Dendritic cell treated with granulocyte-macrophage colony-stimulating factor and Interleukin-4, amounts not matched to agents 40 ng/mL and 50 ng/mL, for 4 days (primary cell): ENCODE measurements at regions of chr5 and their contacts with region 1.

Region 1: GRCh38 chr5:76351577-76351976 is 51.5 kb upstream of the IQGAP2 start:
- H3K4me3 Mint-ChIP-seq: no peak overlapping the region
- H3K27ac Mint-ChIP-seq: no peak overlapping the region
- H3K4me1 Mint-ChIP-seq: no peaks in the 10 kb centered on the region
- H3K27me3 Mint-ChIP-seq: no peaks in the 10 kb centered on the region

Region 2: DNA sequence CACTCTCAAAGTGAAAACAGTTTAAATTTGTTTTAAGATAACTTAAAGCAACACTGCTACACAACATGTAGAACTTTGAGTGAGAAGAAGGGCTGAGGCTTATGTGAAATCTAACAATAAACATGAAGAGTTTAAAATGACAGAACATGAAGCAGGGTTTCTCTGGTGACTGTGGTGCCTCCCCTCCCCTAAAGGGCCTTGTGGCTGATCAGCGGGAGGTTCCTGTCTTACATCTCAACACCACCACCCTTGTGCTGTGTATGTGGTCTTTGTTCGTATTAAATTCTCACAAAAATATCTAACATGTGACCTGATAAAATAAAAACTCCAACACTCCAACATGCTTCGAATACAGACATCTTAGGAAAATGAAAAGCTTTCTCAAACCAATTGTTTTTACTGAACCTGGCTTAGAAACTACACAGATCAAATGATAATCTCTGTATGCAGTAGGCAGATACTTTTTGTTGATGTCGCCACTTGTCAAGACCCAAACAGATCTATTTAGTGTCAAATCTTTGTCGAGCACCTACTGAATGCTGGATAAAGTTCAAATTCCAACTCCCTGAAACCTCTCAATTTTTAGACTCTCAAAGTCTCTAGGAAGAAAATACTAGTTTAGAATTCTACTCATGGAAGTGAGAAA is 41.6 kb after region 1 on chr5:
- intact Hi-C with region 1: loop called (anchors 5 kb)
- H3K4me3 Mint-ChIP-seq: no peak overlapping the region
- H3K27ac Mint-ChIP-seq: no peak overlapping the region
- H3K4me1 Mint-ChIP-seq: peaks cover 17% of the 10 kb centered on the region
- H3K27me3 Mint-ChIP-seq: no peaks in the 10 kb centered on the region